ENCODE measurements at regions of chr1 and their contacts with region 1.

Region 1: DNA sequence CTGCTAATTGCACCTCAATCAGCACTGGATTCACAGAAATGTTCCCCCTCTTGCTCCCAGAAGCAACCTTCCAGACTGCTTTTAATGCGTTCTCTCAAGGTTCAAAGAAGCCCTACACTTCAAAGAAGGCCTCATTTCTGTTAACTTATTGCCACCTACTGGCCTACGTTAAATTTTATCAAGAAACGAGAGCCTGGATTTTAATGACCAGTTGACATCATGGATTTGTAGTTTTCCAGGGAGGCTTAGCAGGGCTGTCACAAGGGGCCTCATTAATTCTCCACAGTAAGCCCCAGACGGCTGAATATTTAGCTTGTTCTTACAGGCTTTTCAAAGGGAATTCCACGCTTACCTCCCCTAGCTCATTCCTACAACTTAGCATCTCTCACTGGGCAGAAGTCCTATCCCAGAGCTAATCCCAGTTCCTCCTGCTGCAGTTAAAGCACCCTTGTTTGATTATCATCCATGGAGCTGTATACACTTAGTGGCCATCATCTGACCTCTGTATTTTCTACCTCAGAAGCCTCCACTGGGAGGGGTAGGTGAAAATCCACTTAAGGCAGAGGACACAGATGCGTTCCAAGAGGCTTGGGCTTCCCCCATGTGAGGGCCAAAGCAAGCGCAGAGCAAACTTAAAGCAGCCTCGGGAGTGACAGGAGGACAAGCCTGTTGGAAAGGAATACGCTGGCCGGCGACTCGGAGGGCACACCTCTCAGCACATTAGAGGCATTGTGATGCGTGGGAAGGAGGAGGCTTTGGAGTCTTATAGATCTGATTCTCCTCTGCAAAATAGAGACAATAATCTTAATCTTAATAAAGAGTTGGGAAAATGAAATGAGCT is 32.2 kb upstream of the CYP4X1 start:
- DNase-seq: peak; percentile 6
- H3K4me3 Mint-ChIP-seq: no peak overlapping the region
- H3K27ac Mint-ChIP-seq: no peak overlapping the region
- H3K4me1 Mint-ChIP-seq: no peaks in the 10 kb centered on the region
- H3K27me3 Mint-ChIP-seq: peaks cover 60% of the 10 kb centered on the region
- CTCF ChIP-seq: no peak

Region 2: DNA sequence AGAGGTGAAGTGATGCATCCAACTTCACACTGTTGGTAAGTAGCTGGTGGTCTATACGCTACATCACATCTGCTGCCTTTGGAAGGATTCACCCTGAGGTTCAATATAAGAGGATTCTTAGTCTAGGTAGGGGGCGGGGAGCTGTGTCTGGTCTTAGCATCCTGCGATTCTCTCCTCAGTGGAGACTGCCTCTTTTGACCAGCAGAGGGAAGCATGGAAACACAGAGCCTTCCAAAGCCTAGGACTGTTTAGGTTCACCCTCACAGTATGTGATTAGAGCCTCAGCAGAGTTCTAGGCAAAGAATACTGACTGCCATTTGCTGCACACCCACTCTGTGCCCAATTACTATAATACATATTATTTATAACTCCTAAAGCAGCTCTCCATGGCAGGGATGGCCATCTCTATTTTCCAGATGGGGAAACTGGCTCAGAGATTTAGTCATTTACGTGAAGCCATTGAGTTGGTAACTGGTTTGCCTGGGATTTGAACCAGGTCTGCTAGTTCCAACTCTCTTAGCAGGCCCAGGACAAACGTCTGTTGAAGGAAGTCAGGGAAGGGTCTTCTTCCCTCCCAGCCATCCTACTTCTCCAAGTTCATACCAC is 243.5 kb before region 1 on chr1:
- CTCF ChIA-PET with region 1: no interaction called
- intact Hi-C with region 1: loop called (anchors 1 kb)
- DNase-seq: peak; percentile 74
- H3K4me3 Mint-ChIP-seq: no peak overlapping the region
- H3K27ac Mint-ChIP-seq: no peak overlapping the region
- H3K4me1 Mint-ChIP-seq: peaks cover 32% of the 10 kb centered on the region
- H3K27me3 Mint-ChIP-seq: peaks cover 19% of the 10 kb centered on the region
- CTCF ChIP-seq: peak; percentile 77